ENCODE measurements at regions of chr12 and their contacts with region 1.

Region 1: DNA sequence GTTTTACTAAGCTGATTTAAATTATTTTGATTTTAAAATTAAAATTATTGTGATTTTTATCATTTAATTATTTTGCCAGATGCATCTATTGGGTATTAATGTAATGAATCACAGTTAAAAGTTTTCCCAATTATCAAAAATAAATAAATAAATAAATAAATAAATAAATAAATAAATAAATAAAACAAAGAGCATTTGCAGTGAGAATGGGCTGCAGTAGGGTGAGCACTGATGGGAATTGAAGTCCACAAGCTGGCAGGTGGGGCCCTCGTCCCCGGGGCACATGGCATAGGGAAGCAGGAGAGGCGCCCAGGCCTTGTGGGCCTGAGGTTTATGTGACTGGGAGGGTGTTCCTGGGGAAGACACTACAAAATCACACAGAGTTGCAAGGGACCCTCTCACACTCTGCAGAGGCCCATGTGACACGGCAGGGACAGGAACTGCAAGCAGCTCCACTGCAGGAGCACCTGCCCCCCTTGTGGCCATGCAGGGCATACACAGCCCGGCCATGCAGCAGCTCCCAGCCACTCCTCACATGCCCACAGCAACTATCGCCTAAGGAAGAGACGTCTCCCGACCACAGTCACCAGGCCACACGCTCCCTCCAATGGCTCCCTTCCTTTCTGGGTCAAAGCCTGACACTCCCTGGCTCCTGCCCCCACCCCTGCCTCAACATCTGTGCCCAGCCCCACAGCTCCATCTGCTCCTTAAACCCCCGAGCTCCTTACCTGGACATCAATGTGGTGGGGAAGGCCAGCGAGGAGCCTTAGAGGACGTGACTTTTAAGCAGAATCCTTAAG is 256.3 kb upstream of the SFSWAP start:
- DNase-seq: peak in 2 of 6 donors; percentile 39 to 72
- ATAC-seq: peak in 3 of 4 donors; percentile 84 to 88 (median 84)
- H3K4me3 ChIP-seq: no peak overlapping the region
- H3K27ac ChIP-seq: no peak overlapping the region
- H3K4me1 ChIP-seq: no peaks in the 10 kb centered on the region
- H3K27me3 ChIP-seq: no peaks in the 10 kb centered on the region
- CTCF ChIP-seq: peak; percentile 26 to 48 (median 36)

Region 2: DNA sequence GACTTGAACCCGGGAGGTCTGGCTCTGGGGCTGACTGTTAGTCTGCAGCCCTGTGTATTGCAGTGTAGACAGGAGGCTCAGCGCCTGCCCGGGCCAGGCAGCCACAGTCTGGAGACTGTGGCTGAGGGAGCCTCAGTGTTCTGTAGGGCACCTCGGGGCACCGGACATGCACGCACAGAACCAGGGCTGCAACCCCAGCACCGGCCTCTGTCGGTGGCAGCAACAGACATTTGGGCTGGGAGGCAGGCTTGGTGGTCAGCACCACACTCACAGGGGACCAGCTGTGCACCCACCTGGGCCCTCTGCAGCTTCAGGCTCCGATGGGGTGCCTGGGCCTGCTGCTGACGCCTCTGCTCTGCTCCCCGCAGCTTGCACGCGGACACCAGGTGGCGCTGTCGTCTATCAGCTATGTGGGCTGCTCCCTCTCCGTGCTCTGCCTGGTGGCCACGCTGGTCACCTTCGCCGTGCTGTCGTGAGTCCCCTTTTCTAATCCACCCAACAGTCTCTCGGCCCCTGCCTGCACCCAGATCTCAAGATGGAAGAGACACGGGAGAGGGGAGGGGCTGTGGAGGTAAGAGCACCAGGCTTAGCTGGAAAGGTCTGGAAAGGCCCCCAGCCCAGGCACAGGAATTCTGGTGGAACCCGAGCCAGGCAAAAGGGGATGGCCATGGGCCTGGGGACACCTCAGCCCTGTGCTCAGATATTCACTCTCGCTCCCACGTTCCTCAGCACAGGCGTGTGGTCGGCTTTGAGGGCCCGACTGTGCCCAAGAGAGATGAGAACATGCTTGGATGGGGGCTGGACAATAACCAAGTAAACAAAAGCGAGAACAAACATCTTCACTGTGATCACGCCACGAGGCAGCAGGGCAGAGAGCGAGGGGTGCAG is 349.9 kb before region 1 on chr12:
- intact Hi-C with region 1: loop called in 1 of 3 experiments (anchors 10 kb)
- DNase-seq: peak; percentile 63 to 98 (median 86)
- ATAC-seq: peak; percentile 91 to 97 (median 96)
- H3K4me3 ChIP-seq: no peak overlapping the region
- H3K27ac ChIP-seq: no peak overlapping the region
- H3K4me1 ChIP-seq: no peaks in the 10 kb centered on the region
- H3K27me3 ChIP-seq: no peaks in the 10 kb centered on the region
- CTCF ChIP-seq: peak; percentile 70 to 90 (median 89)

Region 3: GRCh38 chr12:131559517-131560516 is 105.2 kb after region 1 on chr12:
- intact Hi-C with region 1: no loop called
- DNase-seq: no peak
- ATAC-seq: no peak
- H3K4me3 ChIP-seq: no peak overlapping the region
- H3K27ac ChIP-seq: no peak overlapping the region
- H3K4me1 ChIP-seq: no peaks in the 10 kb centered on the region
- H3K27me3 ChIP-seq: no peaks in the 10 kb centered on the region
- CTCF ChIP-seq: no peak